ENCODE measurements at regions of chr16 and their contacts with region 1.

Region 1: DNA sequence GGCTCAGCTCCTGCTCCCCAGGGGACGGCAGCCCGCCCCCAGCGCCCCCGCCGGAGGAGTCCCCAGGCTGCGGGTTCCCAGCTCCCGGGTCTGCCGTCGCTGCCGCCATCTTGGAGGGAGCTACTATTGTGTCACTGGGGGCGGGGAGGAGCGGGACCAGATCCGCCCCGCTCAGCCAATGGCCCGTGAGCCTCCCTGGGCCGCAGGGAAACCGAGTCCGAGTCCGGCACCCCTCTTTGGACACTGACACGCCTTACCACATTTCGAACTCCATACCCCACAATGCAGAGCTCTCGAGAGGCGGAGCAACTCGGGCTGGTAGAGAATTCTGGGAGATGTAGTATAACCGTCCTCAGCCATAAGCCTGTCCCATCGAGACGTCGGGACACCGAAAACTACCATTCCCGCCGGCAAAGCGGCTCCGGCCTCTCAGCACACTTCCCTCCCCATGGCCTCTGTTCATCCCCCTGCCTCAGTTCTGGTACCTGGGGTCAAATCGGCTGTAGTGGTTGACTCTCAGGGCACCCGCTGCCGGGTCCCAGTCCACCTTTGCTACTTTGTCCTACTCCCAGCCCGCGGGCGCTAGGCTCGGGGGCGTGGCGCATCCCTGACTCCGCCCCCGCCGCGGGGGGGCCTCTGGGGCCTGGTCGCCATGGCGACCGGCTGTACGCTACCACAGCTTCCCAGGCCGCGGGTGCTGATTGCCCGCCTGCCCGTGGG is at the starts of genes RANBP10 and TSNAXIP1:
- DNase-seq: peak; percentile 93
- ATAC-seq: peak; percentile 89
- H3K4me3 Mint-ChIP-seq: peak within 1 kb of the TSS; percentile 96
- H3K27ac Mint-ChIP-seq: peak within 1 kb of the TSS; percentile 96
- H3K4me1 Mint-ChIP-seq: peaks cover 49% of the 10 kb centered on the region
- H3K27me3 Mint-ChIP-seq: no peaks in the 10 kb centered on the region
- CTCF ChIP-seq: no peak
- total RNA-seq, gene RANBP10: 25.2 and 30.6 TPM in 2 replicates
- total RNA-seq, gene TSNAXIP1: 1.2 and 1.9 TPM in 2 replicates

Region 2: DNA sequence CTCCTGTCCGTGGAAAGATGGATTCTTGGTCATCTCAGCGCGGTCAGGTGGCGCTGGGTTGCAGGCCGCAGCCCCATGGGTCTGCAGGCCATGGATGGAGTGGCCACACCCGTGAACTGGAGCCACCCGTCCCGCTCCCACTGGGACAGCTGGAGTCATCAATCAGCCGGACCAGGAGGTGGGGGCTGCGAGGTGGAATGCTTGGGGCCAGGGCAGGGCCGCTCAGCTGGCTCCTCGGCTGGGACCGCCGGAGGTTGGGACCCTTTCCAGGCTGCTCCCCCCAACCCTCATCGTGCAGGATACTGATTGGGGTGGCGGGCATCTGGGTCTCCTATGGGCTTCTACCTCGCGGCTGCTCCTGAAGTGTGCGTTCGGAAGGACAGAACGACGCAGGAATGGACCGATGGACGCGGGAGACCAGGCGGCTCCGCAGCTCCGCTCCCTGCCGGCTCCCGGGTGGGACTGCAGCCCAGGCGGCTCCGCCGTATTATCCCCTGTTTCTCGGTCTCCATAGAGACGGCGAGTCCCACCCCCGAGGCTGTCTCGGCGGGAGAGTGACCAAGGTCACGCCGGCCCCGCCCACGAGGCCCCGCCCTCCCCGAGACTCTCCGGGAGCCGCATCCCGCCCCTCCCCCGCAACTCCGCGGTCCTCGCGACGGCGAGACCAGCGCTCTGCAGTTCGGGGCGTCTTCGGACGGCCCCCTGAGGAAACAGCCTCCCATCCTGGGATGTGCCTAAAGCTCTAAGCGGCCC is 413.4 kb before region 1 on chr16 and contains the start of gene TPPP3:
- CTCF ChIA-PET with region 1: no interaction called
- POLR2A ChIA-PET with region 1: no interaction called
- intact Hi-C with region 1: no loop called
- DNase-seq: no peak
- ATAC-seq: peak; percentile 45
- H3K4me3 Mint-ChIP-seq: peak within 1 kb of the TSS; percentile 79
- H3K27ac Mint-ChIP-seq: no peak within 1 kb of the TSS
- H3K4me1 Mint-ChIP-seq: peaks cover 19% of the 10 kb centered on the region
- H3K27me3 Mint-ChIP-seq: peaks cover 23% of the 10 kb centered on the region
- CTCF ChIP-seq: no peak
- total RNA-seq, gene TPPP3: 0.15 TPM in 1 of 2 replicates, not detected in the other

Region 3: GRCh38 chr16:67490335-67491096 is 316.1 kb before region 1 on chr16:
- CTCF ChIA-PET with region 1: no interaction called
- POLR2A ChIA-PET with region 1: interaction called, 6 read pairs
- intact Hi-C with region 1: loop called (anchors 2 kb)
- DNase-seq: no peak
- ATAC-seq: no peak
- H3K4me3 Mint-ChIP-seq: peak overlapping the region; percentile 61
- H3K27ac Mint-ChIP-seq: peak overlapping the region; percentile 89
- H3K4me1 Mint-ChIP-seq: peaks cover 77% of the 10 kb centered on the region
- H3K27me3 Mint-ChIP-seq: no peaks in the 10 kb centered on the region
- CTCF ChIP-seq: no peak

Region 4: DNA sequence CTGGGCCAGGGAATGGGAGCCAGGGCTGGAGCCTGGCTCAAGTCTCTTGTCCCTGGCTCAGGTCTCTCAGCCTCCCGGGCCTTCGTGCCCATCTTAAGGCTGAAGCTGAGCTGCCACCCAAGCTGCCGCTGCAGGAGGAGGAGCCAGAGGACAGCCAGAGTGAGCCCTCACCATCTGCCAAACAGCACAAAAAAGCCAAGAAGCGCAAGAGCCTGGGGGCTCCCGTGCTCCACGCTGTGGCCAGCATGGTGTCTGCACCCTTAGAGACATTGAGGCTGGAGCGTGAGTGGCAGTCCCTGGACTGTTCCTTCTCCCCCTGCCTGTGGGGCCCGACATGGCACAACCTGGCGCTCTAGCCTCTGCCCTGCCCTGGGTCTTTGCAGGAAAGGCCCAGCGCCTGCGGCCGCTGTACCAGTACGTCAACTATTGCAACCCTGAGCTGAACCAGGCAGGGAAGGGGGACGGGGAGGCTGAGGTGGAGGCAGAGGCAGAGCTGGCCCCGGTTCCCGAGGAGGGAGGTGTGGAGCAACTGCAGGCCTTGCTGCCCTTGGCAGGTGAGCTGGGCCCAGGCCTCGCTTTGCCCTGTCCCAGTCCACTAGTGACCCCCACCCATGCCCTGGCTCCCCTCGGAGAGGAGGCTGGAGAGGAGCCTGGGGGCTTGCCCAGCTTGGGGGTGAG is 138.6 kb before region 1 on chr16:
- CTCF ChIA-PET with region 1: interaction called, 9 read pairs
- POLR2A ChIA-PET with region 1: interaction called, 9 read pairs
- intact Hi-C with region 1: loop called (anchors 2 kb)
- DNase-seq: peak; percentile 66
- ATAC-seq: peak; percentile 84
- H3K4me3 Mint-ChIP-seq: peak overlapping the region; percentile 87
- H3K27ac Mint-ChIP-seq: peak overlapping the region; percentile 85
- H3K4me1 Mint-ChIP-seq: peaks cover 49% of the 10 kb centered on the region
- H3K27me3 Mint-ChIP-seq: no peaks in the 10 kb centered on the region
- CTCF ChIP-seq: no peak

Region 5: GRCh38 chr16:67767953-67768352 is 38.6 kb before region 1 on chr16:
- CTCF ChIA-PET with region 1: no interaction called
- POLR2A ChIA-PET with region 1: no interaction called
- intact Hi-C with region 1: no loop called
- DNase-seq: no peak
- ATAC-seq: no peak
- H3K4me3 Mint-ChIP-seq: no peak overlapping the region
- H3K27ac Mint-ChIP-seq: no peak overlapping the region
- H3K4me1 Mint-ChIP-seq: no peaks in the 10 kb centered on the region
- H3K27me3 Mint-ChIP-seq: no peaks in the 10 kb centered on the region
- CTCF ChIP-seq: no peak

Region 6: DNA sequence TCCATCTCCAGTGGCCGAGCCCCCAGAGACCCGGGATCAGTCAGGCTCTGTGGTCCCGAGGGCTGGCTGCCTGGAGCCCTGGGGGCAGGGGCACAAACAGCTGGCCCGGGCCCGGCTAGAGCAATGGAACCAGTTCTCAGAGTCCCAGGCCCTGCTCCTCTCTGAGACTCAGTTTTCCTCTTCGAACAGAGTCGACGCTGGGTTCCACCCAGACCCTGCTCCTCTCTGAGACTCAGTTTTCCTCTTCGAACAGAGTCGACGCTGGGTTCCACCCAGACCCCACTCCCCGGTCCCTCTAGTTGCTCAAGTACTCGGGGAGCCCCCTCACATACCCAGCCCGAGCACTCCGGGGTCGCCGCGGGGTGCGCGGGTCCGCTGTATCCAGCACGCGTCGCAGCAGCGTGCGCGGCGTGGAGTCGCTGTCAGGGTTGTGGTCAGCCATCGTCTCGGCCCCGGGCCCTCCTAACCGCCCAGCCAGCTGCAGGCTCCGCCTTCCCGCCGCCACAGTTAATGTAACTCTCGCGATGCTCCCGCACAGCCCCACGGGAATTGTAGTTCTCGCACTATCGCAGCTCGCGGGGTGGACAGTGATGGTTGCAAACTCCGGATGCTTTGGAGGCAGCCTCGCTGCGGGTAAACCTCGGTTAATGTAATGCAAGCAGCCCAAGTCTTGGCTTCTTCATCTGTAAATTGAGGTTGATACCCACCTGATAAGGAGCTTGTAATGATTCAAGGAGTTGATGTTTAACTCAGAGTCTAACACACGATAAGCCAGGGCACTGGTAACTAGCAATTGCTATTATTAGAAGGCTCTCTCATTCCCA is 27.0 kb after region 1 on chr16:
- CTCF ChIA-PET with region 1: interaction called, 3 read pairs
- POLR2A ChIA-PET with region 1: interaction called, 5 read pairs
- intact Hi-C with region 1: loop called (anchors 1 kb)
- DNase-seq: peak; percentile 91
- ATAC-seq: peak; percentile 100
- H3K4me3 Mint-ChIP-seq: peak overlapping the region; percentile 86
- H3K27ac Mint-ChIP-seq: peak overlapping the region; percentile 56
- H3K4me1 Mint-ChIP-seq: peaks cover 14% of the 10 kb centered on the region
- H3K27me3 Mint-ChIP-seq: no peaks in the 10 kb centered on the region
- CTCF ChIP-seq: no peak

Region 7: DNA sequence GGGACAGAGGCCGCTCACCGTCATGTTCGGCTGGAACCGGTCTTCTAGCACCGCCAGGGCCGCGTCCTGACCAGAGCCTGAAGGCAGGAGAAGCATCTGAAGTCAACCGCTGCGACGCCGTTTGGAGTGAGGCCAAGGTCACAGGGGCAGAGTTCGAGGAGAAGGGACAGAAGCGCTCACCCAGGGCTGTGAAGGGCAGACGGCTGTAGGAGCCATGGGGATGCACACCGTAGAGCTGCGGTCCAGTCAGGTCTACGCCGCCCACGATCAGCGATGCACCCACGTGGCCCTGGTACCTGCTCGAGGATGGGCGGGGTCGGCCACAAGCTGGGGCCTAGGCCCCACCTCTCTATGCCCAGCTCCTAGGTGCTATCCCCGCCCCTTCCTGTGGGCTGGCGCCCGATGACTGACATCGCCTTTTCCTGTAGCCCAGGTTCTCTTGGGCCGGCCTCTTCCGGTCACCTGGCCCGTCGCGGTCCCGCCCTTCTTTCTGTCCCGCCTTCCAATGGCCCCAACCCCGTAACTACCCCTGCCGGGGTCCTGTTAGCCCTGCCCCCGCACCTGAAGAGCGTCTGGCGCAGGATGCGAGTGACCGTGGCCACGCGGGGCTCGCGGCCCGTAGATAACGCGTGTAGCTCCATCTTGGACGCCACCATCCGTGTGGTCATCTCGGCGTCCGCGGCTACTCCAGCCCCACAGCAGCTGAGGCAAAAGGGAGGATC is 129.0 kb after region 1 on chr16:
- CTCF ChIA-PET with region 1: no interaction called
- POLR2A ChIA-PET with region 1: interaction called, 13 read pairs
- intact Hi-C with region 1: loop called (anchors 1 kb)
- DNase-seq: peak; percentile 85
- ATAC-seq: peak; percentile 89
- H3K4me3 Mint-ChIP-seq: peak overlapping the region; percentile 99
- H3K27ac Mint-ChIP-seq: peak overlapping the region; percentile 98
- H3K4me1 Mint-ChIP-seq: peaks cover 31% of the 10 kb centered on the region
- H3K27me3 Mint-ChIP-seq: no peaks in the 10 kb centered on the region
- CTCF ChIP-seq: no peak

Region 8: GRCh38 chr16:69339289-69340108 is 1532.9 kb after region 1 on chr16 and contains the starts of genes COG8 and NIP7:
- CTCF ChIA-PET with region 1: no interaction called
- POLR2A ChIA-PET with region 1: no interaction called
- intact Hi-C with region 1: no loop called
- DNase-seq: peak; percentile 87
- ATAC-seq: peak; percentile 91
- H3K4me3 Mint-ChIP-seq: peak within 1 kb of the TSS; percentile 100
- H3K27ac Mint-ChIP-seq: peak within 1 kb of the TSS; percentile 99
- H3K4me1 Mint-ChIP-seq: peaks cover 39% of the 10 kb centered on the region
- H3K27me3 Mint-ChIP-seq: no peaks in the 10 kb centered on the region
- CTCF ChIP-seq: no peak
- total RNA-seq, gene COG8: 40.5 and 45.4 TPM in 2 replicates
- total RNA-seq, gene NIP7: 42.4 and 44.3 TPM in 2 replicates

Region 9: DNA sequence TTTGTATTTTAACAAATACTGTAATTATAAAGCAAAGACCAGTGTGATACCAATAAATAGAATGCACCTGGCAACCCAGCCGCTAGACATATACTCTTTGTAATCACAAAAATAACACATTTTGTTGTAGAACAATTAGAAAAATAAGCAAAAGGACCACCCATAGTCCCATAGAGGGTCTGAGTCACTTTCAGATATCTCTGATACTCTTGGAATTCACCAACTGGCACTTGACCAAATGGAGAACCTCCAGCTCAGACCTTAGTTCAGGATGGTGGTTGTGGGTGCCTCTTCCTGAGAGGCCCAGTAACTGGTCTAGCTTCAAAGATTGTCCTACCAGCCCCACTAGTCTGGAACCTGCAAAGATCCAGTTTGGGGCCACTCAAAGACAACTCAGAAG is 1580.0 kb after region 1 on chr16:
- CTCF ChIA-PET with region 1: no interaction called
- POLR2A ChIA-PET with region 1: no interaction called
- intact Hi-C with region 1: loop called (anchors 10 kb)
- DNase-seq: no peak
- ATAC-seq: no peak
- H3K4me3 Mint-ChIP-seq: peak overlapping the region; percentile 90
- H3K27ac Mint-ChIP-seq: peak overlapping the region; percentile 89
- H3K4me1 Mint-ChIP-seq: peaks cover 36% of the 10 kb centered on the region
- H3K27me3 Mint-ChIP-seq: no peaks in the 10 kb centered on the region
- CTCF ChIP-seq: no peak